IMR-90 (cell line): ENCODE measurements at regions of chr2 and their contacts with region 1.

Region 1: GRCh38 chr2:27303093-27304025 is 4.9 kb downstream of the UCN start:
- DNase-seq: peak; percentile 72
- ATAC-seq: peak; percentile 69
- H3K4me3 ChIP-seq: no peak overlapping the region
- H3K27ac ChIP-seq: no peak overlapping the region
- H3K4me1 ChIP-seq: no peaks in the 10 kb centered on the region; the same call in 1 of the 2 replicates
- H3K27me3 ChIP-seq: peaks cover 39% of the 10 kb centered on the region
- CTCF ChIP-seq: peak; percentile 92
- POLR2A ChIP-seq: no peak
- RAD21 ChIP-seq: peak; percentile 82

Region 2: GRCh38 chr2:27249891-27250651 is 53.3 kb before region 1 on chr2:
- CTCF ChIA-PET with region 1: interaction called, 6 read pairs
- POLR2A ChIA-PET with region 1: interaction called, 3 read pairs
- dilution Hi-C with region 1: no loop called
- in situ Hi-C with region 1: no loop called
- intact Hi-C with region 1: loop called (anchors 1 kb)
- DNase-seq: peak; percentile 31
- ATAC-seq: peak; percentile 81
- H3K4me3 ChIP-seq: no peak overlapping the region
- H3K27ac ChIP-seq: no peak overlapping the region
- H3K4me1 ChIP-seq: peaks cover under 1% of the 10 kb centered on the region
- H3K27me3 ChIP-seq: peaks cover 11% of the 10 kb centered on the region
- CTCF ChIP-seq: peak; percentile 78
- POLR2A ChIP-seq: no peak
- RAD21 ChIP-seq: peak; percentile 81

Region 3: GRCh38 chr2:27281855-27282559 is 21.4 kb before region 1 on chr2 and contains the start of gene TRIM54:
- CTCF ChIA-PET with region 1: interaction called, 11 read pairs
- POLR2A ChIA-PET with region 1: no interaction called
- dilution Hi-C with region 1: no loop called
- in situ Hi-C with region 1: no loop called
- intact Hi-C with region 1: no loop called
- DNase-seq: peak; percentile 33
- ATAC-seq: 0 out of 2 replicates have a peak, but pooled peaks have one; percentile 13
- H3K4me3 ChIP-seq: no peak within 1 kb of the TSS
- H3K27ac ChIP-seq: no peak within 1 kb of the TSS
- H3K4me1 ChIP-seq: peaks cover 29% of the 10 kb centered on the region
- H3K27me3 ChIP-seq: peaks cover 10% of the 10 kb centered on the region
- CTCF ChIP-seq: no peak
- POLR2A ChIP-seq: no peak
- RAD21 ChIP-seq: no peak
- total RNA-seq, gene TRIM54: under 0.01 TPM in 1 of 2 replicates, not detected in the other

Region 4: GRCh38 chr2:27291865-27292264 is 11.5 kb before region 1 on chr2:
- CTCF ChIA-PET with region 1: interaction called, 11 read pairs
- POLR2A ChIA-PET with region 1: no interaction called
- dilution Hi-C with region 1: no loop called
- in situ Hi-C with region 1: no loop called
- intact Hi-C with region 1: no loop called
- DNase-seq: no peak
- ATAC-seq: no peak
- H3K4me3 ChIP-seq: no peak overlapping the region
- H3K27ac ChIP-seq: no peak overlapping the region
- H3K4me1 ChIP-seq: peaks cover 11% of the 10 kb centered on the region
- H3K27me3 ChIP-seq: peaks cover 8% of the 10 kb centered on the region
- CTCF ChIP-seq: no peak; the same call in 1 of the 2 replicates
- POLR2A ChIP-seq: no peak
- RAD21 ChIP-seq: no peak

Region 5: DNA sequence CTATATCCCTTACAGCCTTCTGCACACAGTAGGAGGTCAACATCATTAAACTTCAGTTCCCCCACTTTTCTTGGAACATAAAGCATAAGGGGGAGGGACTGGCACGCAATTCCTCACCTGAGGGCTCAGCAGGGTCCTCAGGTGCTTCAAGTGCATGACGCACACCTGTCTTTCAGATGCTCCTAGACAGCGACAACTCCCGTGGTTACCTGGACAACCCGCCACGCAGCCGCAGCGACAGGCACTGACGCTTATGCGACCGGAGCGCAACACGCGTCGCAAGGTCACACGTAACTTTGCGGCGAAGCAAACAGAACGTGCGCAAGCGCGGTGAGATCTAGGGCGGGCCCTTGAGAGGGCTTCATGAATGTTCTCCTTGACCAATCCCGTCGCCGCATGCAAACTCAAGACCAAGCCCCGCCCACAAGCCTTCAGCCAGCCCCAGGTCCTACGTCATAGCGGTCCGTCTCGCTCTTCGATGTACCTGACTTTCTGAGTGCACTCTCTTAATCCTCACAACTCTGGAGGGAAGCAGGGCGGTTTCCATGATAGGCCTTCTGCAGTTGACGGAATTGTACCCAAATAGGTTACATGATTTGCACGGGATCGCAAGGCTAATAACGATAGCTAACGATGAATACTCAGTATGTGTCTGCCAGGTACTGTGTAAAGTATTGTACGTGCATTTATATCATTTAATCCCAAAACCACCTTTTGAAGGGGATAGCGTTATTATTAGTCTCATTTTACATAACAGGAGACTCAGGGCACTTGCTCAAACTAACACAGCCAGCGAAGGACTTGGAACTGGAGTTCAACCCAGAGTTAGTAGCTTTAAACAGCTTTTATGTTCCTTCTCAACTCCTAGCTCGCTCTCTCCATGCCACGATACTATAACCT is 186.4 kb after region 1 on chr2 and contains the start of gene IFT172:
- CTCF ChIA-PET with region 1: no interaction called
- POLR2A ChIA-PET with region 1: no interaction called
- dilution Hi-C with region 1: no loop called
- in situ Hi-C with region 1: no loop called
- intact Hi-C with region 1: no loop called
- DNase-seq: peak; percentile 98
- ATAC-seq: peak; percentile 99
- H3K4me3 ChIP-seq: peak within 1 kb of the TSS; percentile 56
- H3K27ac ChIP-seq: peak within 1 kb of the TSS; percentile 18
- H3K4me1 ChIP-seq: peaks cover 5% of the 10 kb centered on the region
- H3K27me3 ChIP-seq: no peaks in the 10 kb centered on the region
- CTCF ChIP-seq: no peak
- POLR2A ChIP-seq: peak; percentile 56; the same call in 1 of the 2 replicates
- RAD21 ChIP-seq: no peak
- total RNA-seq, gene IFT172: 23.1 and 25.5 TPM in 2 replicates